Activated T-helper 1 cell treated with anti-CD3 and anti-CD28 coated beads, Interleukin-12 subunit alpha, Interleukin-12 subunit beta, Interleukin-2, Interleukin-4 antibody, amounts not matched to agents 30 ng/mL and 10 ng/mL and 1 ng/mL, durations not matched to agents 14 hours and 24 hours and 36 hours (primary cell): ENCODE measurements at regions of chr12 and their contacts with region 1.

Region 1: DNA sequence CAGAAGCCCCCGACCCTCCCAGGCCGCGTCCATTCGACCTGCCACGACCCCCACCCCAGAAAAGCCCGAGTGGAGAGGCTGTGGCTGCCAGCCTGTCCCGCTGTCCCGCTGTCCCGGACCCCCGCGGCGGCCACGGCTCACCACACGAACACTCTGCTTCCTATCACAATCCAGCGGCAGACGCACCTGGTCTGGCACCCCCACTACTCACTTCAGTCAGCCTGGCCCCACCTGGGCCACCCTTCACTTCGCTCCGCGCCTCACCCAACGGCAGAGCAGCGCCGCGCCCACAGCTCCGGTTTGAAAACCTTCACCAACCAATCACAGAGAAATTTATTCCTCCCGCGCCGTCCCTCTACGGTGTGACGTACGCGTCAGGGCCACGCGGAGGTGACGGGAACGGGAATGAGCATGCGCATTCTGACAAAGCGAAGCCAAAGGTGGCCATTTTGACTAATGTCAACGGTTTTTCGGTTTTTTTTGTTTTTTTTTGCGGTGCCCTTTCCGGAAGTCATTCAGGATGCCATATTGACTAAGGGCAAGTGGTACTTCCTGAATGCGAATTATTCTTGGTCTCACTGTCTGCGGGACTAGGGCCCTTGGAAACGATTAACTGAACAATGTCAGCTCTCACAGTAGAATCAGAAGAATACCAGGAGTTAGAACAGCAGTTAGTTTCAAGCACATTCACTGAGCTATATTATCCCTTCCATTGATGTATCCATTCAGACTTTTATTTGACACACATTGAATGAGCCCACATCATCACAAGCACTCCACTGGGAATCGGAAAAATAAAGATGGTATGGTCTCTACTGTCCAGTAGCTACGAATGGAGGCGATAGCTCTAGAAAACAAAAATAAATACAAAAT is at the start of gene RACGAP1:
- DNase-seq: peak; percentile 98
- H3K4me3 Mint-ChIP-seq: peak within 1 kb of the TSS; percentile 98
- H3K27ac Mint-ChIP-seq: peak within 1 kb of the TSS; percentile 99
- H3K4me1 Mint-ChIP-seq: peaks cover 46% of the 10 kb centered on the region
- H3K27me3 Mint-ChIP-seq: peaks cover 3% of the 10 kb centered on the region
- total RNA-seq, gene RACGAP1: 68.1 and 71.2 TPM in 2 replicates

Region 2: DNA sequence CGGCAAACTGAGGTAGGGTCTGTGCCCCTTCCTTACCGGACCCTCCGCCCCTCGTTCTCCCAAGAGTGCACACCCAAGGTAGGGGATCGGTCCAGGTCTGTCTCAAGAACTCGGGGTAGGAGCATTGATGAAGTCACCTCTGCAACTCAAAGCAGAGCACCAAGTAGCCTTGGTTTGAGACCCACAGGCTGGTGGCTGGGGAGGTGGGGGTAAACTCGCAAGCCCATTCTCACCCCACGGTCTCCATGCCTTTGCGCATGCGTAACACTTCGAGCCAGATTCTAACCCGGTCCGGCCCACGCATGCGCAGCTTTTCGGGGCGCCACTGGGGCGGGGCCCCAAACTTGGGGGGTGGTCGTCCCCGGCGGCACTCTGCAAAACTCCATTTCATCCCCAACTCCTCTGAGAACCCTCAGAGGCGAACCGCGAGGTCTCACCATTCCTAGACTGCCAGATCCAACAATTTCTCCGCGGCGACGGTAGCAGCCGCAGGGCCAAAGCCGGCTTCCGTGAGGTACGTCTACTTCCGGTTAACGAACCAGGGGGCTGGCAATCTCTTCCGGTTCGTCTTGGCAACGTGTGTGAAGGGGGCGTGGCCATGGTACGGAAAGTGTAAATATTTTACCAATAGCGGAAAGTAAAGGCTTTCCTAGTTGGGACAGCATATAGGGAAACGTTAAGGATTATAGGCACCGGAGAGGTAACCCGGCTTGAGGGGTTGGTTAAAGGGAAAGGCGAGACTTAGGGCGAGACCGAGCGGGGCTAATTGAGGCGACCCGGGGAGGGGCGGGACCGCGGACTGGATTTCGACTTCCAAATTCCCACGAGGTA is 457.6 kb before region 1 on chr12 and contains the start of gene MCRS1:
- intact Hi-C with region 1: loop called (anchors 10 kb)
- DNase-seq: peak; percentile 85
- H3K4me3 Mint-ChIP-seq: peak within 1 kb of the TSS; percentile 95
- H3K27ac Mint-ChIP-seq: peak within 1 kb of the TSS; percentile 96
- H3K4me1 Mint-ChIP-seq: peaks cover 57% of the 10 kb centered on the region
- H3K27me3 Mint-ChIP-seq: no peaks in the 10 kb centered on the region
- total RNA-seq, gene MCRS1: 77.1 and 77.9 TPM in 2 replicates

Region 3: GRCh38 chr12:49967042-49967776 is 58.2 kb before region 1 on chr12:
- intact Hi-C with region 1: loop called (anchors 1 kb)
- DNase-seq: peak; percentile 83
- H3K4me3 Mint-ChIP-seq: peak overlapping the region; percentile 67
- H3K27ac Mint-ChIP-seq: peak overlapping the region; percentile 69
- H3K4me1 Mint-ChIP-seq: no peaks in the 10 kb centered on the region
- H3K27me3 Mint-ChIP-seq: peaks cover 34% of the 10 kb centered on the region

Region 4: DNA sequence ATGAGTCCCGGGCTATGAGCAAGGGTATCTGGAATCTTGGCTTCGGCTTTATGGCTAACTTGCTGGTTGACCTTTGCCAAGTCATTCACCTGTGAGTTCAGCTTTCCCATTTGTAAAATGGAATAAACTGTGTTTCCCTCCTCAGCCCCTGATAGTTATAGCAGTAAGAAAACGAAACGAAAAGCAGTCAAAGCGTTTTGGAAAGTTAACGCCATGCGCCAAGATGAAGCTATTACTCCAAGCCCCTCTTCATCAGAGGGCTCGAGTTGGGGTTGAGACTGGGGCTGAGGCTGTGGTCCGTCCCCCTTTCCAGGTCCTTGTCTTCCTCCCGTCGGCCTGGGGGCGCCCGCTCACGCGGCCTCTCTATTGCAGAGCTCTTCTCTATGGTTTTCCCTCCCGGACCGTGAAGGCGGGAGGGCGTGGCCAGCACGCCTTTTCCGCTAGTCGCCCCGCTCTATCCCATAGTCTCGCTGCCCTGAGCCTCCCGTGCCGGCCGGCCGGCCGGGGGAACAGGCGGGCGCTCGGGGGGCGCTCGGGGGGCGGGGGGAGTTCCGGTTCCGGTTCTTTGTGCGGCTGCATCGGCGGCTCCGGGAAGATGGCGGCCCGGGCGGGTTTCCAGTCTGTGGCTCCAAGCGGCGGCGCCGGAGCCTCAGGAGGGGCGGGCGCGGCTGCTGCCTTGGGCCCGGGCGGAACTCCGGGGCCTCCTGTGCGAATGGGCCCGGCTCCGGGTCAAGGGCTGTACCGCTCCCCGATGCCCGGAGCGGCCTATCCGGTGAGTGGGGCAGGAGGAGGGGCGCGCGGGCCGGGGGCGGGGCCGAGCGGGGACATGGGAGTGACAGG is 59.6 kb after region 1 on chr12 and contains the start of gene SMARCD1:
- intact Hi-C with region 1: loop called (anchors 1 kb)
- DNase-seq: peak; percentile 78
- H3K4me3 Mint-ChIP-seq: peak within 1 kb of the TSS; percentile 90
- H3K27ac Mint-ChIP-seq: peak within 1 kb of the TSS; percentile 93
- H3K4me1 Mint-ChIP-seq: peaks cover 31% of the 10 kb centered on the region
- H3K27me3 Mint-ChIP-seq: no peaks in the 10 kb centered on the region
- total RNA-seq, gene SMARCD1: 74.6 and 75.3 TPM in 2 replicates

Region 5: DNA sequence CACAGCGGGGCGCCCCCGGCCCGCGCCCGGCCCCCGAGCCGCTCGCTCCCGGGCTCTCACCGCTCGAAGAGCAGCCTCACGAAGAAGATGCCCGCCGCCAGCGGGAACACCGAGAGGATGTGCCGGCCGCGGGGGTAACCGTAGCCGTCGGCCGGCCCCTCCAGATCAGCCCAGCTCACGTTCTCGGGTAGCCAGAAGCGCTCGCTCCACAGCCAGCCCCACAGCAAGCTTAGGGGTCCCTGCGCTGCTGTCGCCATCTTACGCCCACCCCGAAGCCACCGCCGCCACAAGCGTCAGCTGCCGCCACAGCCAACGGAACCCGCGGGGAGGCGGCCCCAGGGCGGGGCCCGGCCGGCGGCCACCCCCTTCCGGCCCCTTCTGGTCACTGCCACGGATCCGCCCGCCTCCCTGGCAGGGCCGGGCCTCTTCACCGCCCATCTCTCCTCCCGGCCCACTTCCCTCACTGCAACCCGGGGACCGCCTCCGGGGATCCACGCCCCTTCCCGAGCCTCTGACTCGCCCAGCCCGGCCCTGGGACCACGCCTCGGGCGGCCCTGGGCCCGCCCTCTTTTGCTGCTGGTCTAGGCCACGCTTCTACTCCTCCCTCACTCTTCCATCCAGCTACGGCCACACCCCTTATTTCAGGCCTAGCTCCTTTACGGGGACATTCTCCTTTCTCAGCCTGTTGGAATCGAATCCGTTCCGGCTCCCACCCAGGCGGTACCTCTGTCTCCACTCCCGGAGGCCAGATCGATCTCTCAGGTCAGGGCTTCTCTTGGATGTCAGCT is 141.8 kb after region 1 on chr12 and contains the start of gene CERS5:
- intact Hi-C with region 1: loop called (anchors 1 kb)
- DNase-seq: peak; percentile 98
- H3K4me3 Mint-ChIP-seq: peak within 1 kb of the TSS; percentile 99
- H3K27ac Mint-ChIP-seq: peak within 1 kb of the TSS; percentile 95
- H3K4me1 Mint-ChIP-seq: peaks cover 38% of the 10 kb centered on the region
- H3K27me3 Mint-ChIP-seq: no peaks in the 10 kb centered on the region
- total RNA-seq, gene CERS5: 64.2 and 67.9 TPM in 2 replicates